ENCODE measurements at regions of chr11 and their contacts with region 1.

Region 1: DNA sequence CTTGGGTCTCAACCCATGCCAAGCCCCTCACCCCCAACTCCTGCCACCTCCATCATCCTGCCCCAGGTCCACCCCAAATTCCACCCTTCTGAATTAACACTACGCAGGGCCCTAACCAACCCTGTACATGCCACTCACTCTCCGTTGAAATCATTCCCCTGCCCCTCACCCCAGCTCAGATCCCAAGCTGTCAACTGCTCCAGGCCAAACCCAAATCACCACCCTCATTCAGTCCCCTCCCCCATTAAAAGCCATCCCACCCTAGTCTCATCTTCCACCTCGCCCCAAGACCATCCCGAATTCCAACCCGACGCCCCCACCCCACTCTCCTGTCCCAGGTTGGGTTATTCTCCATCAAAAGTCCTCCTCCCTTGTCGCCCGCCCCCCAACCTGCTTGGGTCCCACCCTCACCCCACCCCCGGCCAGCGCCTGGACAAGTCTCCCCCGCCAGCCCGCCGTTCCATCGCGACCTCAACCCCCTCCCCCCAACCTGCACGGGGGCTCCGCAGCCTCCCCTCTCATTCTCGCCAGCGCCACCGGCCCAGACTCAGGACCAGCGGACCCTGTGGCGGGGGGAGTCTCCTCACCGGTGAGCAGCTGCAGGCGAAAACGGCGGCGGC is 466 bp downstream of the FAM168A start:
- DNase-seq: peak in 4 of 35 experiments; percentile 0 to 11 (median 3)
- ATAC-seq: no peak
- H3K4me3 ChIP-seq: peak overlapping the region; percentile 71
- H3K4me3 Mint-ChIP-seq: peak overlapping the region; percentile 90 to 94 (median 94)
- H3K27ac ChIP-seq: peak overlapping the region; percentile 3
- H3K27ac Mint-ChIP-seq: peak overlapping the region; percentile 93 to 94
- H3K4me1 ChIP-seq: peaks cover 15 to 17% of the 10 kb centered on the region in 2 experiments
- H3K4me1 Mint-ChIP-seq: peaks cover 39 to 50% (median 41%) of the 10 kb centered on the region in 3 donors
- H3K27me3 ChIP-seq: no peaks in the 10 kb centered on the region
- H3K27me3 Mint-ChIP-seq: no peaks in the 10 kb centered on the region

Region 2: DNA sequence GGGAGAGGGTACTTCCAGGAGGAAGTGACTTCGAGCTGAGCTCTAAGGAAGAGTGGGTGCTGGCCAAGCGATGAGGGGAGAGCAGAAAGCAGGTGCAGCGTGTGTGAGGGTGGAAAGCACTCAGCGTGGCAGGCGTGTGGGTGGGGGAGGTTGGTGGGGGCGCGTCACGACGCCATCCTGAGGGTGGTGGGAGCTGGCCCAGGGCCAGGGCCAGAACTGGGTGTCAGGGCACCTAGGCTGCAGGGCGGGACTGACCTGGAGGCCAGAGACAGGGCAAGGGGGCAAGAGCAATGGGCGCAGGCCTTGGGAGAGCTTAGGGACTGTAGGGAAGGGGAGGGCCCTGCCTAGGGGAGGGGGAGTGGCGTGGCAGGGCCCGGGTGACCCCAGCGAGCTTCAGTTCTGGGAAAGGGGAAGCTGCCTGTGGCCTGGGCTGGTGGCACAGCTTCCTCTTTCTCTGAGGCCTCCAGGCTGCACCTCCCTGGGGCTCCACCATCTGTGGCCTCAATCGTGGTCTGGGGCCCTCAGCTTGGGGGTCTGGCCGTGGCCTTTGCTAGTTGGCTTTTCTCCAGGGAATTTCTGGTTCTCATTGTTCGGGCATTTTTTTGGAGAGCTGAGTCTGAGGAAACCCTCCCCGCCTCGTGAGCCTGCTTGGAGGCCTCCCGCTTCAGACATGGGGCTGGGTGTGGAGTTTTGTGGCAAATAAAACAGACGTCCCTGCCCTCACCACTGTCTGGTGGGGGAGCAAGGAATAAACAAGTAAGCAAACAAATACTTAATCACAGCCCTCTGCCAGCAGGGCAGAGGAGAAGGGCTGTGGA is 212.4 kb before region 1 on chr11:
- CTCF ChIA-PET with region 1: no interaction called
- POLR2A ChIA-PET with region 1: no interaction called
- DNase-seq: peak in 21 of 35 experiments; percentile 16 to 65 (median 31)
- ATAC-seq: peak; percentile 17 to 62 (median 21)
- H3K4me3 ChIP-seq: peak overlapping the region in 1 of 2 donors; percentile 2
- H3K4me3 Mint-ChIP-seq: peak overlapping the region in 1 of 3 donors; percentile 65
- H3K27ac ChIP-seq: peak overlapping the region; percentile 38
- H3K27ac Mint-ChIP-seq: peak overlapping the region; percentile 78 to 82
- H3K4me1 ChIP-seq: peaks cover 19 to 65% of the 10 kb centered on the region in 2 experiments
- H3K4me1 Mint-ChIP-seq: peaks cover 68 to 79% (median 75%) of the 10 kb centered on the region in 3 donors
- H3K27me3 ChIP-seq: no peaks in the 10 kb centered on the region
- H3K27me3 Mint-ChIP-seq: no peaks in the 10 kb centered on the region

Region 3: DNA sequence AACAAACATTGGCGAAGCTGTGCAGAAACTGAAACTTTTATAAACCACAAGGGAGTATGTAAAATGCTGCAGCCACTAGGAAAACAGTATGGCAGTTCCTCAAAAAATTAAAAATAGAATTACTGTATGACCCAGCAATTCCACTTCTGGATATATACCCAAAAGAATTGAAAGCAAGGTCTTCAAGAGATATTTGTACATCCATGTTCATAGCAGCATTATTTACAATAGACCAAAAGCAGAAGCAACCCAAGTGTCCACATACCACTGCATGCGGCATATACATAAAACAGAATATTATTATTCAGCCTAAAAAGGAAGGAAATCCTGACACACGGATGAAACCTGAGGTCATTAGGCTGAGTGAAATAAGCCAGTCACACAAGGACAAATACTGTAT is 135.5 kb before region 1 on chr11:
- CTCF ChIA-PET with region 1: no interaction called
- POLR2A ChIA-PET with region 1: no interaction called
- DNase-seq: no peak
- ATAC-seq: no peak
- H3K4me3 ChIP-seq: no peak overlapping the region
- H3K4me3 Mint-ChIP-seq: no peak overlapping the region
- H3K27ac ChIP-seq: no peak overlapping the region
- H3K27ac Mint-ChIP-seq: no peak overlapping the region
- H3K4me1 ChIP-seq: no peaks in the 10 kb centered on the region
- H3K4me1 Mint-ChIP-seq: peaks cover 0 to 2% (median 0%) of the 10 kb centered on the region in 3 donors
- H3K27me3 ChIP-seq: no peaks in the 10 kb centered on the region
- H3K27me3 Mint-ChIP-seq: no peaks in the 10 kb centered on the region

Region 4: GRCh38 chr11:73614591-73615244 is 17.3 kb after region 1 on chr11:
- CTCF ChIA-PET with region 1: no interaction called
- POLR2A ChIA-PET with region 1: no interaction called
- DNase-seq: no peak
- ATAC-seq: no peak
- H3K4me3 ChIP-seq: no peak overlapping the region
- H3K4me3 Mint-ChIP-seq: no peak overlapping the region
- H3K27ac ChIP-seq: no peak overlapping the region
- H3K27ac Mint-ChIP-seq: no peak overlapping the region
- H3K4me1 ChIP-seq: no peaks in the 10 kb centered on the region
- H3K4me1 Mint-ChIP-seq: no peaks in the 10 kb centered on the region
- H3K27me3 ChIP-seq: peaks cover 0 to 7% of the 10 kb centered on the region in 2 experiments
- H3K27me3 Mint-ChIP-seq: peaks cover 4 to 6% of the 10 kb centered on the region in 2 donors

Region 5: GRCh38 chr11:74971424-74971823 is 1374.0 kb after region 1 on chr11:
- CTCF ChIA-PET with region 1: no interaction called
- POLR2A ChIA-PET with region 1: interaction called in 1 of 2 experiments, 10 read pairs
- DNase-seq: no peak
- ATAC-seq: no peak
- H3K4me3 ChIP-seq: no peak overlapping the region
- H3K4me3 Mint-ChIP-seq: no peak overlapping the region
- H3K27ac ChIP-seq: no peak overlapping the region
- H3K27ac Mint-ChIP-seq: no peak overlapping the region
- H3K4me1 ChIP-seq: no peaks in the 10 kb centered on the region
- H3K4me1 Mint-ChIP-seq: peaks cover 0 to 5% (median 5%) of the 10 kb centered on the region in 3 donors
- H3K27me3 ChIP-seq: no peaks in the 10 kb centered on the region
- H3K27me3 Mint-ChIP-seq: no peaks in the 10 kb centered on the region

Measured in T-cell (primary cell).